Endothelial cell of umbilical vein (primary cell): ENCODE measurements at regions of chr5 and their contacts with region 1.

Region 1: GRCh38 chr5:108260117-108260857 is 121.6 kb downstream of the FBXL17 start:
- DNase-seq: peak; percentile 89
- H3K4me3 ChIP-seq: peak overlapping the region in 2 of 3 experiments; percentile 4 to 51
- H3K27ac ChIP-seq: peak overlapping the region; percentile 7
- H3K4me1 ChIP-seq: peaks cover 8% of the 10 kb centered on the region
- H3K27me3 ChIP-seq: no peaks in the 10 kb centered on the region
- CTCF ChIP-seq: peak; percentile 93 to 96
- POLR2A ChIP-seq: no peak

Region 2: GRCh38 chr5:108181975-108182374 is 78.3 kb before region 1 on chr5:
- CTCF ChIA-PET with region 1: no interaction called
- POLR2A ChIA-PET with region 1: no interaction called
- dilution Hi-C with region 1: no loop called
- intact Hi-C with region 1: no loop called
- DNase-seq: no peak
- H3K4me3 ChIP-seq: no peak overlapping the region
- H3K27ac ChIP-seq: no peak overlapping the region
- H3K4me1 ChIP-seq: no peaks in the 10 kb centered on the region
- H3K27me3 ChIP-seq: no peaks in the 10 kb centered on the region
- CTCF ChIP-seq: no peak
- POLR2A ChIP-seq: no peak

Region 3: GRCh38 chr5:108238936-108239887 is 21.1 kb before region 1 on chr5:
- CTCF ChIA-PET with region 1: interaction called, 27 read pairs
- POLR2A ChIA-PET with region 1: no interaction called
- dilution Hi-C with region 1: no loop called
- intact Hi-C with region 1: no loop called
- DNase-seq: no peak
- H3K4me3 ChIP-seq: no peak overlapping the region
- H3K27ac ChIP-seq: no peak overlapping the region
- H3K4me1 ChIP-seq: no peaks in the 10 kb centered on the region
- H3K27me3 ChIP-seq: no peaks in the 10 kb centered on the region
- CTCF ChIP-seq: no peak
- POLR2A ChIP-seq: no peak

Region 4: DNA sequence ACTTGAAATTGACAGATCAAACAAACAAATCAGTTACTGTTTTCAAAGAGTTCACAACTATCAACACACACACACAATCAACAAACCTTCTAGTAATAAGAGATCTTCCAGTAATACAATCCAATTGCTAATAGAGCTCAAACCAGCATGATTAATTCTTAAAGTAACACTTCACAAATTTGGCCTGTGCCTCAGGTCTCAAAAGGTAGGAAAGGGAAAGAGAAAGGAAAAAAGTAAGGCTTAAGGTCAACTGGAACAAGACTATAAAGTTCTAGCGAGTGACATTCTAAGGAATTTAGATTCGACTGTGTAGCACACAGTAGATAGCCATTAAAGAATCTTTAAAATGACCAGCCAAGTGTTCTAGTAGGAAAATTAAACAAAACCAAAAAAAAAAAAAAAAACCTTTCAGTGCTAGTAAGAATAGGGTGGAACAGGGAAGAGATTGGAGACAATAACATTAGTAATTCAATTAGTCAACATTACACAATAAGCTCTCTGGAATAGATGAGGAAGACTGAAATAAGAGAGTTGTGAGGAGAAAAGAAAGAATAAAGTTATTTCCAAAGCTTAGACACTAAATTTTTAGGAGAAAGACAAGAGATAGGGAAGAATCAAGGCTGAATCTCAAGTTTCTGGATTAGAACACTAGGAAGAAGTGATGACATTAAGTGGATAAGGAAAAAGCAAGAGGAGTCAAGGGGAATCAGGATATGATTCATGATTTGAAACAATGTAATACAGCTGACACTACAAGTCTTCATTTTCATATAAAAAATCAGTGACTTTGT is 35.5 kb after region 1 on chr5:
- CTCF ChIA-PET with region 1: interaction called, 22 read pairs
- POLR2A ChIA-PET with region 1: no interaction called
- dilution Hi-C with region 1: no loop called
- intact Hi-C with region 1: no loop called
- DNase-seq: peak; percentile 80
- H3K4me3 ChIP-seq: no peak overlapping the region
- H3K27ac ChIP-seq: peak overlapping the region; percentile 75
- H3K4me1 ChIP-seq: peaks cover 12% of the 10 kb centered on the region
- H3K27me3 ChIP-seq: no peaks in the 10 kb centered on the region
- CTCF ChIP-seq: no peak
- POLR2A ChIP-seq: no peak

Region 5: DNA sequence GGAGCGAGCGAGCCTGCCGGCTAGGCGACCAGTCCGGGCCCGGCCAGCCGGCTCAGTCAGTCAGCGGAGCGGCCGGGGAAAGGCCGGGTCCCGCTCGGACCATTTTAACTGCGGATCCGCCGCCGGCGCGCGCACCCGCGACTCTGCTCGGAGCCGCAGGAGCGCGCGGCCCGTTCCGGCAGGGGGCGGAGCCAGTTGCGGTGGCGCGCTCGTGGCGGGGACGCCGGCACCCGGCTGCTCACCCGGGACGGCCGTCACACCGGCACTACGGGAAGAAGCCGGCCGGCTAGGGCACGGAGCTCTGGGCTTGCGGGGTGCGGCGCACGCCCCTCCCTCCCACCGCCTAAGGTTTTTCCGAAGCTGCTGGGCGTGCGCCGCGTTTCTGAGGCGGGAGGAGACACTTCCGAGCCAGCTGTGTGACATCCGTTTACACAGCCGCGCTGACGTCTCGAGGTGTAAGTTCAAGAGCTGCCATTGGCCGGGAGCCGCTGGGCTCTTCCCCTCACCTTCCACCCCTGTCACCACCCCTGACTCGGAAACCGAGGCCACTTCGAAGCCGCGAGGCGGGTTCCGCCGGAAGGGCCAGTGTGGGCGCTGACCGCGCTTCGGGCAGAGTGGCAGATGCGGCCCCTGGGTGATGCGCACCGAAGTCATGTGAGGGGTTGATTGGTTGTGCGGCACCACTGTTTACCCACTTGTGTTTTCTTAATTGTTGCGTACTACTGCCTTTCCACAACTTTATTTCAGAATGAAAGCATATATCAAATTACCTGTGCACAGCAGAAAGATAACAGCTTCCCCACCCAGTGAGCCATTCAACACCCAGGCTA is 121.9 kb after region 1 on chr5 and contains the start of gene FBXL17:
- CTCF ChIA-PET with region 1: interaction called, 8 read pairs
- POLR2A ChIA-PET with region 1: no interaction called
- dilution Hi-C with region 1: no loop called
- intact Hi-C with region 1: loop called (anchors 1 kb)
- DNase-seq: peak; percentile 81
- H3K4me3 ChIP-seq: peak within 1 kb of the TSS; percentile 45 to 99 (median 64)
- H3K27ac ChIP-seq: peak within 1 kb of the TSS; percentile 90
- H3K4me1 ChIP-seq: peaks cover 17% of the 10 kb centered on the region
- H3K27me3 ChIP-seq: no peaks in the 10 kb centered on the region
- CTCF ChIP-seq: no peak
- POLR2A ChIP-seq: peak; percentile 66
- total RNA-seq, gene FBXL17: 8.8 and 13.9 TPM in 2 replicates

Region 6: GRCh38 chr5:108521841-108522506 is 261.7 kb after region 1 on chr5:
- CTCF ChIA-PET with region 1: interaction called, 3 read pairs
- POLR2A ChIA-PET with region 1: no interaction called
- dilution Hi-C with region 1: no loop called
- intact Hi-C with region 1: loop called (anchors 2 kb)
- DNase-seq: peak; percentile 71
- H3K4me3 ChIP-seq: no peak overlapping the region
- H3K27ac ChIP-seq: no peak overlapping the region
- H3K4me1 ChIP-seq: no peaks in the 10 kb centered on the region
- H3K27me3 ChIP-seq: no peaks in the 10 kb centered on the region
- CTCF ChIP-seq: peak; percentile 50 to 54
- POLR2A ChIP-seq: no peak